SK-N-SH (cell line): ENCODE measurements at regions of chr5 and their contacts with region 1.

Region 1: DNA sequence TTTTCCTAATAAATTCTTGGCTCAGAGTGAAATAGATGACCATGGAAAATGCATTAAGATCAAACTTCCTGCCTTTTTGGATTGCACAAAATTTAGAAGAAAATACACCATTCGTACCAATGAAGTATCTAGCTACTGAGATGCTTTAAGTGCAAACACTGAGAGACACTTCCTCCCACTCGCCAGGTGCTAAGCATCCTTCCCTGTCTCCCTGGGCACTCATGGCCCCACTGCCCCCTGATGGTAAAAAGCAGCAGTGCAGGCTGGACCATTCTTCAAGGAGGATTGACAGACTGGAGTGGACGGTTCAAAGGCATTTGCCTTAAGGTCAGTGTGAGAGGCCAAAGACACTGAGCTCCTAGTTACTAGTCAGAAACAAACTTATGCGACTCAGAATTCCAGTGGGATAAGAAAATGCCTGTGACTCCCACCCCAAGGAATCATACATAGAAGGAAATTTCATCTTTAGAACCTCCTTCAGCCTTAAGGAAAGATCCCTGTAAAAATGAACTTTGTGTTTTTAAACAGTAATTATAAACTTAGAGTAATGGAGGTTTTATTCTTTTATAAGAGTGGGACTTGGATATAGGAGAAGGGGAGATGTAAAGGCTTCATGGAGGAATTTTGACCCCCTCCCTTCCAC is 86.0 kb upstream of the SLC30A5 start:
- DNase-seq: peak; percentile 70
- H3K4me3 ChIP-seq: peak overlapping the region in 1 of 2 experiments; percentile 12; a peak in 2 of 4 replicates
- H3K27ac ChIP-seq: peak overlapping the region in 1 of 2 experiments; percentile 93; a peak in 2 of 4 replicates
- H3K4me1 ChIP-seq: peaks cover 0 to 11% of the 10 kb centered on the region in 2 experiments; a peak in 1 of 4 replicates
- H3K27me3 ChIP-seq: no peaks in the 10 kb centered on the region
- CTCF ChIP-seq: peak; percentile 77
- EP300 ChIP-seq: 0 out of 4 replicates have a peak, but pooled peaks of 1 of the 2 experiments have one; percentile 8
- RAD21 ChIP-seq: peak; percentile 90

Region 2: DNA sequence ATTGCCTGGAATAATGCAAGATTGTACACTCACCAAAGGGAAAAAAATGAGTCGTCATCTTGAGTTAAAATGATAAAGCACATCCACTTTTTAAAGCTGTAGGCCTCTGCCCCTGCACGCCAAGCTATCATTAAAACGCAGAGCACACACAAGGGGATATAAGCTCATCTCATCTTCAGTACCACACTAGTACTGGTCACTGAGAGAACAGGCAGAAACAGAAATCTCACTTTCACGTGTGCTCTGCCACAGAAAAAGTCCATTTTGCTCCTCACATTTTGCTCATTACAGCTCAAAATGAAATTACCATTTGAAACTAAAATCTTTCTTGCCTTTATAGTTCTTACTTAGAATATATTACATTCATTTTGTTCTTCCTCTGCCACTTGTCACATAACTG is 13.2 kb before region 1 on chr5:
- CTCF ChIA-PET with region 1: interaction called, 18 read pairs
- POLR2A ChIA-PET with region 1: no interaction called
- DNase-seq: peak; percentile 30
- H3K4me3 ChIP-seq: no peak overlapping the region
- H3K27ac ChIP-seq: peak overlapping the region in 1 of 2 experiments; percentile 85; a peak in 2 of 4 replicates
- H3K4me1 ChIP-seq: peaks cover 0 to 10% of the 10 kb centered on the region in 2 experiments; a peak in 2 of 4 replicates
- H3K27me3 ChIP-seq: no peaks in the 10 kb centered on the region
- CTCF ChIP-seq: no peak
- EP300 ChIP-seq: no peak
- RAD21 ChIP-seq: no peak

Region 3: DNA sequence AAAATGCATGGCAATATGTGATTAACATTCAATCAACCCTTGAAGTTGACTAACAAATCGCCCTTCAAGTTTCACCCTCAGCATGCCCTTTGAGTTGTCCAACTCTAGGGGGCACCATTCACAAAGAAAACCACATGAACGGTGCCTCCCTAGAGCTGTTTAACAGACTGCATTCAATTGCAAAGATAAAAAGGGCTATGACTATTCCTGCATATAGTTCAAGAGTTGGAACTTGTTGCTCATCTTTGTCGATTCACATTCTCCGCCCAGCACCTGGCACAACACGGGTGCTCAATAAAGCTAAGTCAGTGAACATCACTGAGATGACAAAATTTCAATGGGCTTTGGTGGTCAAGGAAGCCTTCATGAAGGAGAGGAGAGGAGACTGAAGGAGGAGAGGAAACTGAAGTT is 16.4 kb after region 1 on chr5:
- CTCF ChIA-PET with region 1: interaction called, 55 read pairs
- POLR2A ChIA-PET with region 1: no interaction called
- DNase-seq: peak; percentile 68
- H3K4me3 ChIP-seq: no peak overlapping the region
- H3K27ac ChIP-seq: 0 out of 4 replicates have a peak overlapping the region, but pooled peaks of 1 of the 2 experiments have one; percentile 16
- H3K4me1 ChIP-seq: peaks cover 0 to 3% of the 10 kb centered on the region in 2 experiments; a peak in 1 of 4 replicates
- H3K27me3 ChIP-seq: no peaks in the 10 kb centered on the region
- CTCF ChIP-seq: peak; percentile 68
- EP300 ChIP-seq: no peak
- RAD21 ChIP-seq: peak; percentile 92